ENCODE measurements at regions of chr9 and their contacts with region 1.

Region 1: GRCh38 chr9:122159026-122159924 is at the starts of genes MORN5 and NDUFA8:
- DNase-seq: peak; percentile 94 to 97 (median 95)
- H3K4me3 ChIP-seq: peak within 1 kb of the TSS; percentile 67 to 94 (median 86)
- H3K4me3 Mint-ChIP-seq: peak within 1 kb of the TSS; percentile 98 to 99
- H3K27ac ChIP-seq: peak within 1 kb of the TSS; percentile 19 to 89
- H3K27ac Mint-ChIP-seq: peak within 1 kb of the TSS; percentile 88 to 95 (median 93)
- H3K4me1 ChIP-seq: peaks cover 7 to 10% of the 10 kb centered on the region in 2 donors
- H3K4me1 Mint-ChIP-seq: peaks cover 32% of the 10 kb centered on the region
- H3K27me3 ChIP-seq: peaks cover 0 to under 1% of the 10 kb centered on the region in 2 donors
- H3K27me3 Mint-ChIP-seq: peaks cover 9 to 13% (median 11%) of the 10 kb centered on the region in 3 donors
- CTCF ChIP-seq: no peak
- polyA plus RNA-seq, gene MORN5: not detected
- polyA plus RNA-seq, gene NDUFA8: 19.6 to 71.2 (median 63.5) TPM

Region 2: DNA sequence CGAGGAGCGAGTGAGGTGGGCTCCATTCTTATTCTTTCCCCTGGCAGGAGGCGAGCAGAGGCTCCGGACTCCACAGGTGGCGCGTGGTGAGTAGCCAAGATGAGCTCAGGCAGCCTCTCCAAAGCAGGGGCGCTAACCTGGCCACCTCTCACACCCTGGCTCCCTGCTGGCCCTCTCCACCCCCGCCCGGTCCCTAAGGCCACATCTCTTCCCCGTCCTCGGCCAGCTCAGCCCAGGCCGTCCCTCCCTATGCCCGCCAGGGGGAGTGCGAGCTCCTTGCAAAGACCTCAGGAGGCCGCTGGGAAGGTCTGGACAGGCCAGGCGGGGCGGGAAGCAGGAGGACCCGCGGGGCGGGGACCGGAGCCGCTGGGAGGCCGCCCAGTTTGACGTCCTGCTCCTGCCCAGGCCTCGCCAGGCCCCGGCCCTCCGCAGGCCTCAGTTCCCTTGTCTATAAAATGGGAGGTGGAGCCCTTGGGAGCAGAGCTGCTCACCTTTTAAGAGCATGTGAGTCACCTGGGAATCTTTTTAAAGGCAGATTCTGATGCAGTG is 613.3 kb before region 1 on chr9:
- intact Hi-C with region 1: no loop called
- DNase-seq: peak; percentile 81 to 89 (median 84)
- H3K4me3 ChIP-seq: no peak overlapping the region
- H3K4me3 Mint-ChIP-seq: no peak overlapping the region
- H3K27ac ChIP-seq: no peak overlapping the region
- H3K27ac Mint-ChIP-seq: no peak overlapping the region
- H3K4me1 ChIP-seq: peaks cover 14 to 15% of the 10 kb centered on the region in 2 donors
- H3K4me1 Mint-ChIP-seq: peaks cover 12% of the 10 kb centered on the region
- H3K27me3 ChIP-seq: peaks cover 0 to 9% of the 10 kb centered on the region in 2 donors
- H3K27me3 Mint-ChIP-seq: peaks cover 6 to 41% (median 31%) of the 10 kb centered on the region in 3 donors
- CTCF ChIP-seq: peak; percentile 95

Region 3: DNA sequence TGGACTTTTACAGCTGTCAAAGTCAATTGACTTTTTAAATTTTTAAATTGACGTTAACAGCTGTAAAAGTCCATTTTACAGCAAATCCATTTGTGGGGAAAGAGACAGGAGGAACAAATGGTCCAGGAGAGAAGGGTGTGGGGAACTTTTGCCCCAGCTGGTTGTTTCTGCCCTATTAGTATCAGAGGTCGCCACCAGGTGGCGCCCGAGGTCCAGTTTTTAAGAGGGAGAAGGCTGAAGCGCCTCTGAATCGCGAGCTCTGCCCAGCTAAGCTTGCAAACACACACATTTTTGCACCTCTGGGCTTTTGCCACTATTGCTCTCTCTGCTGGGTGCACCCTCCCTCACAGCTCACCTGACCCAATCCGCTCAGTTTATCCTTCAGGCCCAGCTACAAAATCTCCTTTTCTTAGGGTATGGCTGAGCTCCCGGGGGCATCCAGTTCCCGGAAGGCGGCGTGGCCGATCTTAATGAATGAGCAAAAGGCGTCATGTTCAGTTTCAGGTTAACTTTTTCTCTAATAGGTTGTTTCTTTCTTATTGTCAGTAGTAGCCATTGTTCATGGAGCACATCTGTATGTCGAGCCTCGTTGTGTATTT is 59.9 kb before region 1 on chr9:
- intact Hi-C with region 1: loop called (anchors 5 kb)
- DNase-seq: peak; percentile 63 to 69 (median 67)
- H3K4me3 ChIP-seq: peak overlapping the region in 1 of 3 experiments; percentile 43
- H3K4me3 Mint-ChIP-seq: peak overlapping the region; percentile 65 to 76
- H3K27ac ChIP-seq: no peak overlapping the region
- H3K27ac Mint-ChIP-seq: no peak overlapping the region
- H3K4me1 ChIP-seq: peaks cover 5 to 6% of the 10 kb centered on the region in 2 donors
- H3K4me1 Mint-ChIP-seq: peaks cover 12% of the 10 kb centered on the region
- H3K27me3 ChIP-seq: peaks cover 0 to 5% of the 10 kb centered on the region in 2 donors
- H3K27me3 Mint-ChIP-seq: peaks cover 8 to 20% (median 18%) of the 10 kb centered on the region in 3 donors
- CTCF ChIP-seq: peak; percentile 87